Pancreas (tissue), 10 donors: ENCODE measurements at regions of chr6 and their contacts with region 1.

Region 1: DNA sequence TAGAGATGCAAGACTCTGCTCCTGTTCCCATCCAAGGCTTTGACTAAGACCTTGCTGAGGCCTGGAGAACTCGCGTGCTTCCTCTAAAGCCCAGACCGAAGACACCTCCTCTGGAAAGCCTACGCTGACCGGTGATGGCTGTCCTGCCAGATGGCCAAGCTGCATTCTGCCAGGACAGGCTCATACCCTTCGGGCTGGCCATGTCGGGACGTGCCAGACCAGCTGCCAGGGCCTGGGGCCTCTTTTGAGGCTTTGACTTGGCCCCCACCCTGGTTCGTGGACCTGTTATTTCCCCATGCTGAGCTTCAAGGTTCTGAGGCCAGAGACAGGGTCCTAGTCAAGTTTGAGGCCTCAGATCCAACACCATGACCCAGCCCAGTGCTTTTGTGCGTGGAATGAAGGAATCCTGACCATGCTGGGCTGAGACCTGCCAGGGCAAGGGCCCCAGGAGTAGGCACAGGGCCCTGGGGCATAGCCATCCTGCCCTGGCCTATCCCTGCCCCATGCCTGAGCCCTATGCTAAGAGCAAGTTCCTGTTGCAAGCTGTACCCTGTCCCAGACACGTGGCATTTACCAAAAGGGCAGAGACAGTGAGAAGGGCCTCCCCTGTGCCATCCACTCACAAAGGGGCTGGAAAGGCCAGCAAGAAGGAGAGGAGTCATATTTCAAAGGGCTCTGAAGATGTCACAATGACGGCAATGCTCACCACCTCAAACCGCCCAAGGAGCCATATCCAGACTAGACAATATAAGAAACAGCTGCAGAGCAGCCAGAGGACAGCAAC is 42.8 kb downstream of the MRPL14 start:
- DNase-seq: peak in 1 of 6 donors; percentile 41
- ATAC-seq: no peak
- H3K4me3 ChIP-seq: no peak overlapping the region
- H3K27ac ChIP-seq: no peak overlapping the region
- H3K4me1 ChIP-seq: peaks cover 0 to 6% (median 5%) of the 10 kb centered on the region in 3 donors
- H3K27me3 ChIP-seq: no peaks in the 10 kb centered on the region
- CTCF ChIP-seq: no peak

Region 2: GRCh38 chr6:43667245-43668150 is 416.9 kb before region 1 on chr6:
- intact Hi-C with region 1: loop called in 2 of 3 experiments (anchors 5 kb)
- DNase-seq: peak; percentile 79 to 96 (median 90)
- ATAC-seq: peak; percentile 81 to 92 (median 88)
- H3K4me3 ChIP-seq: peak overlapping the region in 1 of 4 donors; percentile 23
- H3K27ac ChIP-seq: peak overlapping the region in 1 of 4 donors; percentile 63
- H3K4me1 ChIP-seq: peaks cover 14 to 21% (median 21%) of the 10 kb centered on the region in 3 donors
- H3K27me3 ChIP-seq: no peaks in the 10 kb centered on the region
- CTCF ChIP-seq: peak; percentile 92 to 96 (median 92)

Region 3: DNA sequence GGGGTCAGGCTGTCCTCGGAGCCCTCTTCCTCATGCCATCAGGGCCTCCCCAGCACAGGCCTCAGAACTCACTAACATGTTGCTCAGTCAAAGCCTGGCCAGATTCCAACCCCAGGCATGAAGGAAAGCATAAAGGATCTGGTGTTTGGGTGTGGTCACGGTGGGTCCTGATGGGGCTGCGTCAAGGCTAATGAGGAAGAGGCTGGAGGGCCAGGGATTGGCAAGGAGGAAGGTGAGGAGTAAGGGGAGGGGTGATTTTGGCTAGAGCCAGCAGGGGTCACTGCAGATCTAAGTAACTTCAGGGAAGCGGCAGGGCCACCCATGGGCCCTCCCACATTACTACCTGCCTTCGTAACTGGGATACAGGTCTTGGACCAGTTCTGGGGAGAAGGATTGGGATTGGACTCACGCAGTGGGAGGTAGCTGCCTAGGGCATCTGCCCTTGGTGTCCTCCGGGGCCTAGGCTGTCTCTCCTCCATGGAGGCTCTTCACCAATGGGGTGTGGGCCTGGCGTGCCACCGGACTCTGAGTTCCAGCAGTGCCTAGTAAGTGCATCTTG is 360.6 kb before region 1 on chr6:
- intact Hi-C with region 1: loop called in 2 of 3 experiments (anchors 5 kb)
- DNase-seq: peak; percentile 71 to 86 (median 78)
- ATAC-seq: peak; percentile 92 to 96 (median 94)
- H3K4me3 ChIP-seq: no peak overlapping the region
- H3K27ac ChIP-seq: no peak overlapping the region
- H3K4me1 ChIP-seq: no peaks in the 10 kb centered on the region
- H3K27me3 ChIP-seq: no peaks in the 10 kb centered on the region
- CTCF ChIP-seq: peak; percentile 41 to 55 (median 46)

Region 4: DNA sequence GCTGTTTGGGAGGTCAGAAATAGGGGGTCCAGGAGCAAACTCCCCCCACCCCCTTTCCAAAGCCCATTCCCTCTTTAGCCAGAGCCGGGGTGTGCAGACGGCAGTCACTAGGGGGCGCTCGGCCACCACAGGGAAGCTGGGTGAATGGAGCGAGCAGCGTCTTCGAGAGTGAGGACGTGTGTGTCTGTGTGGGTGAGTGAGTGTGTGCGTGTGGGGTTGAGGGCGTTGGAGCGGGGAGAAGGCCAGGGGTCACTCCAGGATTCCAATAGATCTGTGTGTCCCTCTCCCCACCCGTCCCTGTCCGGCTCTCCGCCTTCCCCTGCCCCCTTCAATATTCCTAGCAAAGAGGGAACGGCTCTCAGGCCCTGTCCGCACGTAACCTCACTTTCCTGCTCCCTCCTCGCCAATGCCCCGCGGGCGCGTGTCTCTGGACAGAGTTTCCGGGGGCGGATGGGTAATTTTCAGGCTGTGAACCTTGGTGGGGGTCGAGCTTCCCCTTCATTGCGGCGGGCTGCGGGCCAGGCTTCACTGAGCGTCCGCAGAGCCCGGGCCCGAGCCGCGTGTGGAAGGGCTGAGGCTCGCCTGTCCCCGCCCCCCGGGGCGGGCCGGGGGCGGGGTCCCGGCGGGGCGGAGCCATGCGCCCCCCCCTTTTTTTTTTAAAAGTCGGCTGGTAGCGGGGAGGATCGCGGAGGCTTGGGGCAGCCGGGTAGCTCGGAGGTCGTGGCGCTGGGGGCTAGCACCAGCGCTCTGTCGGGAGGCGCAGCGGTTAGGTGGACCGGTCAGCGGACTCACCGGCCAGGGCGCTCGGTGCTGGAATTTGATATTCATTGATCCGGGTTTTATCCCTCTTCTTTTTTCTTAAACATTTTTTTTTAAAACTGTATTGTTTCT is 314.7 kb before region 1 on chr6 and contains the start of gene VEGFA:
- intact Hi-C with region 1: loop called in 2 of 3 experiments (anchors 5 kb)
- DNase-seq: peak; percentile 81 to 99 (median 92)
- ATAC-seq: peak; percentile 59 to 76 (median 68)
- H3K4me3 ChIP-seq: peak within 1 kb of the TSS; percentile 76 to 96 (median 87)
- H3K27ac ChIP-seq: peak within 1 kb of the TSS; percentile 92 to 100 (median 96)
- H3K4me1 ChIP-seq: peaks cover 8 to 11% (median 8%) of the 10 kb centered on the region in 3 donors
- H3K27me3 ChIP-seq: no peaks in the 10 kb centered on the region
- CTCF ChIP-seq: peak; percentile 87 to 94 (median 92)
- total RNA-seq, gene VEGFA: 55.2 to 127 (median 90.0) TPM